Heart left ventricle (tissue), 16 donors: ENCODE measurements at regions of chr4 and their contacts with region 1.

Region 1: DNA sequence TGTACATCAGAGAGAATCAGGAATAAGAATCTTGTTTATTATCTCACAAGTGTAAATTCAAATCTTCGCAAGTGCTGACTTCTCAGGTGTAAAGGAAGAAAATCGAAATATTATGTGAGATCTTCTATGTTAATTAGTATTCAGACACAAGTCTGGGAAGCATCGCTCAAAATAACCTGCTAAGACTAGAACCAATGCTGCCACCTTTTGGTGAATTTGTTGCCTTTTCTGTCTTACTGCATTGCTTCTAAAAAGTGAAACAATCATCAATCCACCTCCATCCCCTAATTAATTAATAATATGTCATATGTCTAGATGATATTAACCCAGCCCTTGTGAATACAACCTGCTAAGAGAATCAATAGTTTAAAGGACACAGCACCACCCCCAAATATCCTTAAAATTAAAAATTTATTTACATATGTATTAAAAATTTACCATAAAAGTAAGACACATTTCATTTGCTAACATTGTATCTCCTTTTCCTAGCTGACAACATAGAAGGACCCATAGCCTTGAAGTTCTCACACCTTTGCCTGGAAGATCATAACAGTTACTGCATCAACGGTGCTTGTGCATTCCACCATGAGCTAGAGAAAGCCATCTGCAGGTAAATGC is 3.5 kb downstream of the EPGN start:
- DNase-seq: no peak
- ATAC-seq: peak in 2 of 4 donors; percentile 53 to 57
- H3K4me3 ChIP-seq: no peak overlapping the region
- H3K27ac ChIP-seq: no peak overlapping the region
- H3K4me1 ChIP-seq: no peaks in the 10 kb centered on the region
- H3K27me3 ChIP-seq: no peaks in the 10 kb centered on the region
- CTCF ChIP-seq: peak; percentile 40 to 80 (median 64)
- POLR2A ChIP-seq: no peak

Region 2: DNA sequence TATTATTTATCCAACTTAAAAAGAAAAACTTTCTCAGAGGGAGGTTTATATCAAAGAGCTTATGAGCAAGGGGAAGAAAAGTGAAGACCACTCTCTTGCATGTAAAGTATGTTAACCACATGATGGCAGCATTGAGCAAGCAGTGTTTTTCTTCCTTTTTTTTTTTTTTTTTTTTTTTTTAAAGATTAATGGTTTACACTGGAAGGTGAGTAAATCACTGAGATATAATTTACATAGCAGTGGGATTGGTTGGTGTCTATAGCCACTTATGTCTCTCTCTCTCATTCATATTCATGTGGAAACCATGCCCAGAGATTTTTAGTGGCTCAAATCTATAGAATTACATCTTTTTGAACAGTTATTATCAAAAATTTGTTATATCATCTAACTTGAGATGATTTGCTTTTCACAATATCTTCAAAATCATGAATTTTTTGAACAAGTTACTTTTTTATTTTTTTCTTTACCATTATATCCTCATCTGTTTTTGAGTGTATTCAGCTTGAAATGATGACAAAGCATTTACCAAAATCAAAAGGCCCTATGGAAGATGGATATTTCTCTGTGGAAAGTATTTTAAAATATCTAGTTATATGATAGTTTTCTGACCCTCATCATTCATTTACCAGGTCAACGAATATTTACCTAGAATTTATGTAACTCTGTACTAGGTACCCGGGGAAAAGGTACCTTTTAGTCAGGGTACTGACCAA is 122.3 kb before region 1 on chr4:
- intact Hi-C with region 1: loop called in 9 of 10 experiments (anchors 1 to 5 kb)
- DNase-seq: no peak
- ATAC-seq: no peak
- H3K4me3 ChIP-seq: no peak overlapping the region
- H3K27ac ChIP-seq: no peak overlapping the region
- H3K4me1 ChIP-seq: no peaks in the 10 kb centered on the region
- H3K27me3 ChIP-seq: no peaks in the 10 kb centered on the region
- CTCF ChIP-seq: peak; percentile 47 to 79 (median 70)
- POLR2A ChIP-seq: no peak

Region 3: DNA sequence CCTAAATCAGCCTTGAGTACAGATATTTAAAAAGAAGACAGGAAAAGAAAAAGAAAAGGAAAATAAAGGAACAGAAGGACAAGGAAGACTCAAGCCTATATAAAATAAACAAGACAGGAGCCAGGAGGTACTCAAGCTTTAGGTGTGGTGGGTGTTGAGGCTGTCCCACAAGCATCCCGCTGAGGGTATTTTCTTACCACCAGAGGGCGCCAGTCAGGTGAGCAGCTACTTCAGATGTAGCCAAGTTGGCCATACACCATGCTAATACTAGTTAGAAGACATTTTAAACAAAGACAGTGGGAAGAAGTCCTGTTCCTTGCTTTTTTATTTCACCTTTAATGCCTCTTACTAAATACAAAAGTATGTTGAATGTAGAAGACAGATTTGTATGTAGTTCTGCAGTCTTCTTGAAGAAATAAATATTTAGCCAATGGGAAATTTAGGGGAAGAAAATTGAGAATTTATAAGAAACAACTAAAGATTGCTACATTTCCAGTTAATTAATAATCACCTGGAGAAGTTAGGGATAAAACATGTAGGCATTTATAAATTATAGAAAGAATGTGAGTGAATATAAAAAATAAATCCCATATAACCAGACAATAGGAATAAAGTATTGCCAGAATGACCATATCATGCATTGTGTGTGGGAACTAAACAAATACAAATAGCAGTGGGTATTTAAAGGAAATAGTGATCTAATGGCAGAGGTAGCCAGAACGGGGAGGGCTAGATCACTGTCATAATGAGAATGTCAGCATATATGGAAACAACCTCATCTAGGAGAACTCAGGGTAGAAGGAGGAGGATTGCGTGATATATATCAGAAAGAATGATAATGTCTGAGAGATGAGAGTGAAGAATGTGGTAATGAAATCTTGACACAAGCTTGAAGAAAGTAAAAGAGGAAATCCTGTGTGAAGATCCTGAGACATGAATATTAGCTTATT is 82.8 kb before region 1 on chr4:
- intact Hi-C with region 1: loop called in 9 of 10 experiments (anchors 1 to 10 kb)
- DNase-seq: peak; percentile 41 to 69 (median 62)
- ATAC-seq: peak; percentile 51 to 77 (median 68)
- H3K4me3 ChIP-seq: no peak overlapping the region
- H3K27ac ChIP-seq: no peak overlapping the region
- H3K4me1 ChIP-seq: peaks cover 0 to 14% (median 4%) of the 10 kb centered on the region in 12 donors
- H3K27me3 ChIP-seq: no peaks in the 10 kb centered on the region
- CTCF ChIP-seq: peak; percentile 68 to 90 (median 81)
- POLR2A ChIP-seq: no peak

Region 4: DNA sequence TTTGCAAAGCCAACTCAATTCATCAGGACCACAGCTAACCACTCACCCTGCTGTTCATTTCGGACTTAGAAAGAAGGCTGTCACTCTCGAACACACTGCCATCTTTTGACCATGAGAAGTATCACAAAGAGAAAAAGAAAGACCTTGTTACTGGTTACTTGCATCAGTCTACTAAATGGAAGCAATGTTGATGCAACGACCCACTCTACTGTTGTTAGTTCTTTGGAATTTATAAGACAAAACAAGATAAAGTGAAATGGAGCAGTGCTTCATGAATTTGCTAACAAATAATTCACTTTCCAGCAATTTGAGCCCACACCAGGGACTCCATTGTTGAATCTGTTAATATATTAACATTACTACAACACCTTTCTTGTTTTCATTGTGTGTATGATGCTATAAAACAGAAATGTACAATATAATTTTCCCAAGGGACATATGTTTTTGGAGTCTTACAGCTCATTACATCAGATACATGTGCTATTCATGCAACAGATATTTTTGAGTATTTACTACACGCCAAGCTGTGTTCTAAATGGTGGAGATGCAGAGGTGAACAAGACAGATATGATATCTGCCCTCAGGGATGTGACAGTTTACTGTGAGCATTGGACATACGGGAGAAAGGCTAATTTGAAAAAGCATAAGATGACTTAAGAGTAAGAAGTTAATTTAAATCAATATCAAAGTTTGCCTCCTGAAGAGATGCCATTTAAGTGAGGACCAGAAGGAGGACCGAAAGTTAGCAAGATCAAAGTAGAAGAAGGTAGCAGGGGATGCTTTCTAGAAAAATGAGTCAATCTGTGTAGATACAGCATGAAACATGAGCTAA is 220.4 kb after region 1 on chr4:
- intact Hi-C with region 1: no loop called
- DNase-seq: no peak
- ATAC-seq: peak; percentile 68 to 83 (median 76)
- H3K4me3 ChIP-seq: no peak overlapping the region
- H3K27ac ChIP-seq: no peak overlapping the region
- H3K4me1 ChIP-seq: peaks cover 0 to 10% (median 5%) of the 10 kb centered on the region in 12 donors
- H3K27me3 ChIP-seq: no peaks in the 10 kb centered on the region
- CTCF ChIP-seq: peak in 10 of 12 donors; percentile 39 to 67 (median 60)
- POLR2A ChIP-seq: no peak